ENCODE measurements at regions of chr1 and their contacts with region 1.

Region 1: DNA sequence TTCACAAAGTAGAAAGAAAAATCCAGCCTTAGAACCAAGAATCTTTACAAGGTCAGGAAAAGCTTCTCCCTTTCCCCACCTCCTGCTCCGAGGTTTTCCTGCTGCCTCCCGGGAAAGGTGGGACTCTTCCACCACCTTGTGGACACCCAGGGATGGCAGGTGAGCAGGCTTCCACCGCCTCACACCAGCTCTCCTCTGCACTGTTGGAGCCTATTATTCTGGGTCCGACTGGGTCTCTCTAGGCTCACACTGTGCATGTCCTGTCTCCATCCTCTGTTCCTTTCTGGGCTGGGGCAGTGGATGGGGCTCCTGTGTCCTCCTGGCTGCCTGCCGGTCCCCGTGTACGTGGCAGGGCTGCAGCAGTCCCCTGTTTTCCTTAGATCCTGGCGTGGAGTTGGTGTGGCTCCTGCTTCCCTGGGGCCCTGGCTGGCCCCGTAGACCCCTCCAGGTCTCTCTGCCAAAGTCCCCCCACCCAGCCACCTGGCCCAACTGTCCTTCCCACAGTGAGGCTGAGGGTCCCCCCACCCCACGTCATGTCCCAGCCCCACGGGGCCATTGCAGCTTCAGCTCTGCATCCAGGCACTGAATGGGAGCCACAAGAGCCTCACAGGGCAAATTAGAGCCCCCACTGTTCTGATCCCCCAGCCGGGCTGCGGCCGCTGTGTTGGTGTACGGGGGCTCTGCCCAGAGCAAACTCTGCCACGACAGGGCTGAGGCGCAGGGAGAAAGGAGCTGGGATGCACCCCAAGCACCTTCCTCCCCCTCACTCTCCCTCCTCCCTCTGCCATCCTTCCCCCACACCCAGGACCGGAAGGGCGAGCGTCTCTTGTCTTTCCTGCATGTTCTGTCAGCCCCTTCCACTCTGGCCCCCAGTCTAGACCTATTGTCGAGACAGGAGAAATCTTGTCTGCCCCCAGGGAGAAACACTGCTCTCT is 3.3 kb upstream of the SLC45A1 start:
- DNase-seq: peak in 27 of 35 experiments; percentile 14 to 68 (median 32)
- ATAC-seq: peak in 2 of 4 experiments; percentile 32 to 37
- H3K4me3 ChIP-seq: no peak overlapping the region
- H3K4me3 Mint-ChIP-seq: no peak overlapping the region
- H3K27ac ChIP-seq: no peak overlapping the region
- H3K27ac Mint-ChIP-seq: no peak overlapping the region
- H3K4me1 ChIP-seq: peaks cover 0 to 22% of the 10 kb centered on the region in 2 experiments
- H3K4me1 Mint-ChIP-seq: peaks cover 11 to 22% (median 15%) of the 10 kb centered on the region in 3 donors
- H3K27me3 ChIP-seq: peaks cover 4 to 49% of the 10 kb centered on the region in 2 experiments
- H3K27me3 Mint-ChIP-seq: peaks cover 33 to 36% of the 10 kb centered on the region in 2 donors

Region 2: DNA sequence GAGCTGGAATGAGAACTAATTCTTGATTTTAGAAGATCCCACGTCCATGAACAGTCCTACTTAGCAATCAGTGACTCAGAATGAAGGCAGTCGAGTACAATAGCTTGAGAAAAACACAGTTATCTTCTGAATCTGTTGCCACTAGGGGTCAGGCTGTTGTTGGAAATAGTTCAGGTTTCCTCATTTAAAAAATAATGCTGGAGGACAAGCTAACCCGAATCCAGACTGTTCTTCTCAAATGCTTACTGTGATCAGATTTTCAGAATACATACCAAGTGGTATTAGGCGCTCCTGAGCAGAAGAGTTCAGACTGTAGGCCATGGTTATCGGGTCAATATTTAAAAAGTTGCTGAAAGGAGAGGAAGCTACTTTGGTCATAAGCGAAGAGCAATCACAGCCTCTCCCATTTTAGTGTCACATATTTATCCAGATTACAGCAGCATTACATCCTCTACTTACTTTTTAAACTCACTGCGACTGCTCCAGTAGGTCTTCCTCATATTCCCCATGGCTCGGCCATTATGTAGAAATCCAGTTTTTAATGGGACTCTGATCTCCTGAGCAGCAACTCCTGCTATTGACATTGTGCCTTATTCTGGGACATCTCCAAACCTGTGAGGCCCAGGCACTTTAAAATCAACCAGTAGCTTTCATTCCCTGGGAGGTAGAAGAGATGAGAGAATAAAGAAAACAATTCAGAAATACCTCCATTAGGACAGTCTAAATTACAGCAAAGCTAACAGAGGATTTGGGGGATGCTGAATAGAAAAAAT is 299.4 kb before region 1 on chr1:
- CTCF ChIA-PET with region 1: interaction called, 3 to 23 read pairs
- POLR2A ChIA-PET with region 1: interaction called in 1 of 2 experiments, 4 read pairs
- DNase-seq: peak in 22 of 35 experiments; percentile 12 to 74 (median 32)
- ATAC-seq: peak; percentile 55 to 65 (median 62)
- H3K4me3 ChIP-seq: no peak overlapping the region
- H3K4me3 Mint-ChIP-seq: no peak overlapping the region
- H3K27ac ChIP-seq: no peak overlapping the region
- H3K27ac Mint-ChIP-seq: no peak overlapping the region
- H3K4me1 ChIP-seq: no peaks in the 10 kb centered on the region
- H3K4me1 Mint-ChIP-seq: peaks cover 0 to 7% (median 2%) of the 10 kb centered on the region in 3 donors
- H3K27me3 ChIP-seq: peaks cover 3 to 9% of the 10 kb centered on the region in 2 experiments
- H3K27me3 Mint-ChIP-seq: peaks cover 13 to 25% of the 10 kb centered on the region in 2 donors

Region 3: DNA sequence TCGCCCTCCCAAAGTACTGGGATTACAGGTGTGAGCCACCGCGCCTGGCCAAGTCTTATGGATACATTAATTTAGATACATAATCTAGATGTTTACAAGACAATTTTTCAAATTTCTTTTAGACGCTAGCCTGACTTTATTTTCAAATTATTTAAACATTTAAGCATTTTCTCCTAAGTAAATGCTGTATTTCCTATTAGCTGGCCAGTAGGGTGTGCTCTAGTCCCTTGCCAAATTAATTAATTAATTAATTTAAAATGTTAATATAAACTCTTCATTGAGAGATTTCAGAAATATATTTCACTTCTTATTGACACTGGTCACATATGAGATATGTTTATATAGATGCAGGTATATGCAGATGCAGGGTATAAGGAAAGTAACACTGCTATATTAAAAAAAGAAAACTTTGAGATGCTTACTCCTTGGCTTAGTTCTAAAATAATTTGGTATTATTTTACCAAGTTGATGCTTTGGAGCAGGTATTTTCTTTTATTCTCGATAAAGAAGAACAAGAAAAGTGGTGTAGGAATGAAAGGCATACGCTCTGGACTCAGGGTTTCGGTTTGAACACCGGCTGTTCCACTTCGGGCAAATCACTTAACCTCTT is 283.3 kb before region 1 on chr1:
- CTCF ChIA-PET with region 1: interaction called in 1 of 2 experiments, 14 read pairs
- POLR2A ChIA-PET with region 1: no interaction called
- DNase-seq: peak in 13 of 35 experiments; percentile 6 to 62 (median 16)
- ATAC-seq: no peak
- H3K4me3 ChIP-seq: no peak overlapping the region
- H3K4me3 Mint-ChIP-seq: no peak overlapping the region
- H3K27ac ChIP-seq: no peak overlapping the region
- H3K27ac Mint-ChIP-seq: no peak overlapping the region
- H3K4me1 ChIP-seq: peaks cover 4 to 6% of the 10 kb centered on the region in 2 experiments
- H3K4me1 Mint-ChIP-seq: peaks cover 5 to 7% (median 5%) of the 10 kb centered on the region in 3 donors
- H3K27me3 ChIP-seq: peaks cover 2 to 12% of the 10 kb centered on the region in 2 experiments
- H3K27me3 Mint-ChIP-seq: peaks cover 4% of the 10 kb centered on the region in 2 donors